Sciatic nerve (tissue), 2 donors: ENCODE measurements at regions of chr5 and their contacts with region 1.

Region 1: GRCh38 chr5:139701056-139701741 is 53.0 kb downstream of the CXXC5 start:
- DNase-seq: no peak
- ATAC-seq: no peak

Region 2: DNA sequence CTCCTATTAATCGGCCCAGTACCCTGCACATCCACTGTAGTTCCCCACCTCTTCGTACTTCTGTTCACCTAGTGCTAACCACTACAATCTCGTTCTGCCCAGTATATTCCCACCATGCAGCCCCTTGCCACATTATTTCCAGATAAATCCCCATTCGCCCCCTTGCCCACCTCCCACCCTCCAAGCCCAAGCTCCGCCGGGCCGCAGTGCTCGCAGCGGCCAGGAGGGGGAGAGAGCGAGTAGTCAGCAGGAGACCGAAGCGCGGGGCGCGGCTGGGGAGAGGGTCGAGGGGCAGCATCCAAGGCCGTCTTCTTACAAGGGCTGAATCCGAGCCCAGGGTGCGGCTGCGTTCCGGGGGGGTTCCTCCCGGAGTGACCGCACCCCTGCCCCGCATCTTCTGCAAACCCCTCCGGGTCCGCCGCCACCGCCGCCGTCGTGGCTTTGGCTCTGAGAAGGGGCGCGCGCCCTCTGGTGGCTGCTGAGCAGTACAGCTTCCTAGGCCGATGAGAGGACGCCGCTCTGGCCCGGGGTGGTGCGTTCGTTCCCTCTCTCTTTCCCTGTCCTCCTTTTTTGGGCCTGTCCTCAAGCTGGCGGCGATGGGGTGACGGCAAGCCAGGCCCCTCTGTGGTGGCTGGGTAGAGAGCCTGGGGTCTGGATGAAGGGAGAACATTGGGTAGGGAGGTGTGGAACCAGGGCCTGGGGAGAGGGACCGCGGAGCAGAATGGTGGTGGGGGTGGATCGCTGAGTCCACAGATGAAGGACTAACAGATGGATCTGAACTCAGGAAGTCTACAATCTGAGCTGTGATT is 64.4 kb after region 1 on chr5:
- intact Hi-C with region 1: loop called (anchors 5 kb)
- DNase-seq: peak; percentile 91
- ATAC-seq: peak; percentile 91